Activated naive CD4-positive, alpha-beta T cell treated with anti-CD3 and anti-CD28 coated beads for 36 hours (primary cell): ENCODE measurements at regions of chr6 and their contacts with region 1.

Region 1: GRCh38 chr6:132669690-132670291 is 10.8 kb upstream of the TAAR1 start:
- DNase-seq: no peak
- H3K4me3 Mint-ChIP-seq: no peak overlapping the region
- H3K27ac Mint-ChIP-seq: no peak overlapping the region
- H3K4me1 Mint-ChIP-seq: peaks cover 3% of the 10 kb centered on the region
- H3K27me3 Mint-ChIP-seq: no peaks in the 10 kb centered on the region

Region 2: GRCh38 chr6:132391391-132392271 is 278.2 kb before region 1 on chr6:
- CTCF ChIA-PET with region 1: no interaction called
- intact Hi-C with region 1: no loop called
- DNase-seq: no peak
- H3K4me3 Mint-ChIP-seq: no peak overlapping the region
- H3K27ac Mint-ChIP-seq: no peak overlapping the region
- H3K4me1 Mint-ChIP-seq: no peaks in the 10 kb centered on the region
- H3K27me3 Mint-ChIP-seq: peaks cover 35% of the 10 kb centered on the region

Region 3: DNA sequence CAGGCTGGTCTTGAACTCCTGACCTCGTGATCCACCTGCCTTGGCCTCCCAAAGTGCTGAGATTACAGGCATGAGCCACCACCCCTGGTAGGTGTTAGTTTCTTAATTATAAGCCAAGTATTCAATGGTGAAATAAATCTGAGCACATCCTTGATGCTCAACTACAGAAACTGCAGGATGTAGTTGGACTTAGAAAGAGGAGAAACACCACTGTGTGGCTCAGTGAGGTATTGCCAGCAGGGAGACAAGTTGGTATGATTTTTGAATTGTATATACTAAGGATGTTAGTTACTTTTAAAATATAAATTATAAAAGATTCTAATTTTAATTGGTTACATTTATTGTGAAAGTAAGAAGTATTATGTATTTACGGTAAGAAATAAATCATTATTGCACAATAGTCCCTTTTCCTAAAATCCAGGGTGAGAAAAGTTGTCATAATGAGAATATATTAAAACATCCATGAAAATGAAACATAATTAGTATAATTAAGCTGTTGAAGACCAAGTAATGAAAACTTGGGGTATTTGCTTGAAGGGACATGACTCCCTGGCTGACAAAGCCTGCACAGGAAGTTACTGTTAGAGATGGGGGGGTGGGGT is 111.1 kb after region 1 on chr6:
- CTCF ChIA-PET with region 1: interaction called, 4 read pairs
- intact Hi-C with region 1: loop called (anchors 1 kb)
- DNase-seq: peak; percentile 27
- H3K4me3 Mint-ChIP-seq: no peak overlapping the region
- H3K27ac Mint-ChIP-seq: no peak overlapping the region
- H3K4me1 Mint-ChIP-seq: no peaks in the 10 kb centered on the region
- H3K27me3 Mint-ChIP-seq: no peaks in the 10 kb centered on the region